CD8-positive, alpha-beta T cell (primary cell): ENCODE measurements at regions of chr21 and their contacts with region 1.

Region 1: GRCh38 chr21:14259747-14260146 is 43.8 kb downstream of the RBM11 start:
- DNase-seq: peak in 2 of 9 experiments; percentile 39 to 55
- ATAC-seq: peak; percentile 54
- H3K4me3 ChIP-seq: no peak overlapping the region
- H3K4me3 Mint-ChIP-seq: no peak overlapping the region
- H3K27ac ChIP-seq: no peak overlapping the region
- H3K27ac Mint-ChIP-seq: no peak overlapping the region
- H3K4me1 ChIP-seq: no peaks in the 10 kb centered on the region
- H3K4me1 Mint-ChIP-seq: no peaks in the 10 kb centered on the region
- H3K27me3 ChIP-seq: no peaks in the 10 kb centered on the region
- H3K27me3 Mint-ChIP-seq: no peaks in the 10 kb centered on the region
- CTCF ChIP-seq: peak; percentile 62

Region 2: DNA sequence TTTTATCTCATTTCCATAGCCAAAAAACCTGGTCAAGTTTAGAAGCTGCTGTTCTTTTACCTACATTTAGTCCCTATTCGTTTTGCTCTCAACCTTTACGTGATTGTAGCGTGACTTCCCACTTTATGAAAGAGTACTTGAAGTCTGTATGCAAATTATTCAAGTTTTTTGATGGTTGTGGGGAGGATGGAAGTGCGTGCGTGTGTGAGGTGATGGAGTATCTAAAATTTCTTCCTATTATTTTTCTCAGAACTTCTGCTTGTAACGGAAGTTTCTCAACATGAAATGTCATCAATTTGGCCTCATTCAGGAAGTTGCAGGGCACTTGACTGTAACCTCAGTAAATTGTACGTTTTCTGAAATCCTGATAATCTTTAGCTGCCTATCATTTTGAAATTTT is 222.4 kb after region 1 on chr21:
- CTCF ChIA-PET with region 1: no interaction called
- POLR2A ChIA-PET with region 1: no interaction called
- intact Hi-C with region 1: no loop called
- DNase-seq: peak in 3 of 9 experiments; percentile 13 to 70 (median 51)
- ATAC-seq: peak; percentile 89
- H3K4me3 ChIP-seq: no peak overlapping the region
- H3K4me3 Mint-ChIP-seq: peak overlapping the region; percentile 55
- H3K27ac ChIP-seq: peak overlapping the region in 1 of 2 experiments; percentile 17
- H3K27ac Mint-ChIP-seq: peak overlapping the region; percentile 9
- H3K4me1 ChIP-seq: peaks cover 6% of the 10 kb centered on the region
- H3K4me1 Mint-ChIP-seq: peaks cover 8% of the 10 kb centered on the region
- H3K27me3 ChIP-seq: no peaks in the 10 kb centered on the region
- H3K27me3 Mint-ChIP-seq: no peaks in the 10 kb centered on the region
- CTCF ChIP-seq: no peak

Region 3: DNA sequence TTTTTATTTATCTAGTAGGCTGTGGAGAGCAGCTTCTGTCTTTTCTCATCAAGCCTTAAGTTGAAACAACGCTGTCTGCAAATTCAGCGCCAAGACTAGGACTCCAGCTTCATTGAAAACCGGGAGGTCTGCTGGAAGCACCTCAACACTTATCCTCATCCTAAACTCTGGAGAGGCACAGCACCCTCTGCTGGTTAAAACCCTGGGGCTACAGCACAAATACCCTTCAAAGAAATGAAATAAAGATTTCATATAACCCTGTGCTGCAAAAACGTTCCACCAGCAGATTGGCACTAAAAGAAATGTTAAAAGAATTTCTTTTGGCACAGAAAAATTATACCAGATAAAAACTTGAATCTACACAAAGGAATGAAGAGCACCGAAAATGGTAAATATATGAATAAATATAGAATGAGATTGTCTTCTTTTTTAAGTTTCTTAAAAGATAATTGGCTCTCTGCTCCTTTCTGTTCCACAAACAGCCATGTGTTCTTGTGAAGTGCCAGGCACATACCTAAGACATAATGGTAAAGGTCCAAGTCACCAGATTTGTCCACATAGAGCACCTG is 514.1 kb after region 1 on chr21:
- CTCF ChIA-PET with region 1: no interaction called
- POLR2A ChIA-PET with region 1: no interaction called
- intact Hi-C with region 1: loop called (anchors 1 to 5 kb)
- DNase-seq: peak; percentile 5 to 63 (median 50)
- ATAC-seq: no peak
- H3K4me3 ChIP-seq: no peak overlapping the region
- H3K4me3 Mint-ChIP-seq: no peak overlapping the region
- H3K27ac ChIP-seq: no peak overlapping the region
- H3K27ac Mint-ChIP-seq: no peak overlapping the region
- H3K4me1 ChIP-seq: no peaks in the 10 kb centered on the region
- H3K4me1 Mint-ChIP-seq: no peaks in the 10 kb centered on the region
- H3K27me3 ChIP-seq: no peaks in the 10 kb centered on the region
- H3K27me3 Mint-ChIP-seq: no peaks in the 10 kb centered on the region
- CTCF ChIP-seq: peak; percentile 64

Region 4: GRCh38 chr21:14864211-14865021 is 604.7 kb after region 1 on chr21:
- CTCF ChIA-PET with region 1: no interaction called
- POLR2A ChIA-PET with region 1: no interaction called
- intact Hi-C with region 1: loop called (anchors 5 to 10 kb)
- DNase-seq: peak in 5 of 9 experiments; percentile 17 to 34 (median 24)
- ATAC-seq: no peak
- H3K4me3 ChIP-seq: no peak overlapping the region
- H3K4me3 Mint-ChIP-seq: no peak overlapping the region
- H3K27ac ChIP-seq: no peak overlapping the region
- H3K27ac Mint-ChIP-seq: no peak overlapping the region
- H3K4me1 ChIP-seq: no peaks in the 10 kb centered on the region
- H3K4me1 Mint-ChIP-seq: peaks cover 8% of the 10 kb centered on the region
- H3K27me3 ChIP-seq: no peaks in the 10 kb centered on the region
- H3K27me3 Mint-ChIP-seq: no peaks in the 10 kb centered on the region
- CTCF ChIP-seq: no peak

Region 5: GRCh38 chr21:15586752-15587445 is 1327.2 kb after region 1 on chr21:
- CTCF ChIA-PET with region 1: no interaction called
- POLR2A ChIA-PET with region 1: no interaction called
- intact Hi-C with region 1: loop called (anchors 1 to 2 kb)
- DNase-seq: no peak
- ATAC-seq: no peak
- H3K4me3 ChIP-seq: no peak overlapping the region
- H3K4me3 Mint-ChIP-seq: no peak overlapping the region
- H3K27ac ChIP-seq: no peak overlapping the region
- H3K27ac Mint-ChIP-seq: no peak overlapping the region
- H3K4me1 ChIP-seq: no peaks in the 10 kb centered on the region
- H3K4me1 Mint-ChIP-seq: no peaks in the 10 kb centered on the region
- H3K27me3 ChIP-seq: no peaks in the 10 kb centered on the region
- H3K27me3 Mint-ChIP-seq: no peaks in the 10 kb centered on the region
- CTCF ChIP-seq: no peak

Region 6: DNA sequence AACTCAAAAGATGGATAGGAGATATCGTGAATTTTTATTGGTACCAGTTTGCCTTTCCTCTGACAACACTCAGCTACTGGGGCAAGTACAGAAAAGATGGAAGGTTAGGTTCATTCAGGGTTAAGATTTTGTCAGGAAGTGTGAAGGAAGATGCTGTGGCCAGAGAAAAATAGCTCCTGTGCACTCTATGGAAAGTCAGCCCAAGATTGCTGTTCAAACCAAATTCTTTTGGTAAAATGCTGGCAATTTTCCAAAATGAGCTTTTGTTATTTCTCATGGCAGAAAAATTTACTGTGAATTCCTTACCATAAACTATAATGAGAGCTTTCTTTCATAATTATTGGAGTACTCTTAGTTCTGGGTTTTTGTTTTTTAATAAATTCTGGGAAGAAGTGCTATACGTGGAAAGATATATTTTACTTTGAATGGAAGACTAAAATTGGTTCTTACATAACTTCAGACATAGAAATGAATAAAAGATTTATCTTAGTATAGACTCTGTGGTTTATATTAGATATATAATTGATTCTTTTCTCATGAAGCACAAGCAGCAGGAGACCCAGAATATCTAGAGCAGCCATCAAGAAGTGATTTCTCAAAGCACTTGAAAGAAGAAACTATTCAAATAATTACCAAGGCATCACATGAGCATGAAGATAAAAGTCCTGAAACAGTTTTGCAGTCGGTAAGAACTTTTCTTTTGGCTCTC is 1582.3 kb after region 1 on chr21:
- CTCF ChIA-PET with region 1: no interaction called
- POLR2A ChIA-PET with region 1: no interaction called
- intact Hi-C with region 1: loop called in 1 of 2 experiments (anchors 10 kb)
- DNase-seq: no peak
- ATAC-seq: no peak
- H3K4me3 ChIP-seq: no peak overlapping the region
- H3K4me3 Mint-ChIP-seq: no peak overlapping the region
- H3K27ac ChIP-seq: no peak overlapping the region
- H3K27ac Mint-ChIP-seq: no peak overlapping the region
- H3K4me1 ChIP-seq: no peaks in the 10 kb centered on the region
- H3K4me1 Mint-ChIP-seq: no peaks in the 10 kb centered on the region
- H3K27me3 ChIP-seq: no peaks in the 10 kb centered on the region
- H3K27me3 Mint-ChIP-seq: no peaks in the 10 kb centered on the region
- CTCF ChIP-seq: no peak